Activated CD8-positive, alpha-beta T cell treated with anti-CD3 and anti-CD28 coated beads, Interleukin-2, amount 10 ng/mL, durations not matched to agents 7 days and 5 days (primary cell): ENCODE measurements at regions of chr10 and their contacts with region 1.

Region 1: DNA sequence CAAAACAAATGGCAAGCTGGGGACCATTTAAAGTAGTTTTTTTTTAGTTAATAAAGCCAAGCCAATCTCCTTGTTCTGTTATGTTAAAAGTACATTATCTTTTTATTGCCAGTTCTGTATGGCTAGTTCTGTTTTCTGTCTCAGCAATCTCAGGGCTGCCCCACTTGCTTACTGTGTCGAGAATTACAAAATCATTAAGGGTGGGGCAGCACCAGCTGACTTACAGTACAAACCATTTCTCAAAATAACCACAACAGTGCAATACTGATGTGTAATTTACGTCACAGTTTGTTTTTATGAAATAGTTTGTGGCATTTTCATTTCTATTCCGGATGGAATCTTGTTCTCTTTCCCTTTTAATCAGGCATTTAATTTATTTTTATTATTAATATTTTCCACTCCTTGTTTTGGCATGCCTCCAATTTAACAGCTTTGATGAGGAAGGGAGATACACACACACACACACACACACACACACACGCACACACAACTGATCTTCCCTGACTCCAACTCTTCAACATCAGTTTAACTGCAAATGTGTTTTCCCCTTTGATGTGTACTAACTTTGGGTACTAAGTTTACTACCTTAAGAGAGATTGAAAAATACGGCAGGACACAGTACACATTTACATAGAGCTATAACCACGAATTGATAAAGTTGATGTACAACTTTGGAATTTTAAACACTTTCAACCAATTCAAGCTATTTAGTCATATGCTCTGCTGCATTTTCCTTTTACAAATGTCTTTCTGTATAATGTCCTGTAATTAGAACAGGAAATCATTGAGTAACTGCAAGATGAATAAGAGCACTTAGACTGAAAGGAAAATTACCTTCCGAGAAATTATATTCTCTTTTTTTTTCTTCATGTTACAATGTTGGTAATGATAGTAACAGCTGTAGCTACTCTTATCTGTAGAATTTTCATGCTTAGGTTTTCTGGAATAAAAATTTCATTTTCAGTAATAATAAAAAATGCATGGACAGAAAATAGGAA is 91.5 kb downstream of the ARID5B start:
- DNase-seq: peak; percentile 49
- ATAC-seq: peak; percentile 49
- H3K4me3 Mint-ChIP-seq: peak overlapping the region; percentile 50
- H3K27ac Mint-ChIP-seq: peak overlapping the region; percentile 75
- H3K4me1 Mint-ChIP-seq: peaks cover 44% of the 10 kb centered on the region
- H3K27me3 Mint-ChIP-seq: no peaks in the 10 kb centered on the region

Region 2: DNA sequence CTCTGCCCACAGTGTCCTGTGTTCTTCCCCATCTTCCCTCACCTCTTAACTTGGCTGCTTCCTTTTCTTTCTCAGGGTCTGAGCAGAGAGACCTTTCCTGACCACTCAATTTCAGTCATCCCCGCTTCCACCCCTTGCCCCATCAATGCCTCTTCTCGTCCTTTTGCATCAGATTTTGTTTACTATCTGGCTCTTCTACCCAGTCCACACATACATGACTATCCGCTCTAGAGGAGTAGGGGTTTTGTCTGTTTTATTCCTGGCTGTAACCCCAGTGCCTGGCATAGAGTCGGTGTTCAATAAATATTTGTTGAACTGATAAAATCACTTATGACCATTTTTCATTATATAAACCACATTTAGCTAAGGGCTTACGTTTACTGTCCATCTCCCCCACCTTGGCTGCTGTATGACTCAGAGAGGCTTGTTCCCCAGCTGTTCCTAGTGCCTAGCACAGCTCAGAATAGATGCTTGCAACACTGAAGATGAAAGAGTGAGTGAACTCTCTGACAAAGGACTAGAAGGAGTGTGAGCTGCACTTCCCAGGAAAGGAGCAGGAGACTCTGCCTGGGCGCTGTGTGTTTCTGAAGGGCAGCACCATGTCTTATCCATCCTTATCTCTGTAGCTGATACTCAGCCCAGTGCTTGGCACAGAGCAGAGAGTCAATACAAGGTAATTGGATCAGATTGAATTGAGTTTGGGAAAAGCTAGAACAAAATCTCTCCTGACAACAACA is 69.6 kb before region 1 on chr10:
- CTCF ChIA-PET with region 1: no interaction called
- POLR2A ChIA-PET with region 1: no interaction called
- DNase-seq: no peak
- ATAC-seq: no peak
- H3K4me3 Mint-ChIP-seq: no peak overlapping the region
- H3K27ac Mint-ChIP-seq: no peak overlapping the region
- H3K4me1 Mint-ChIP-seq: peaks cover 6% of the 10 kb centered on the region
- H3K27me3 Mint-ChIP-seq: no peaks in the 10 kb centered on the region

Region 3: DNA sequence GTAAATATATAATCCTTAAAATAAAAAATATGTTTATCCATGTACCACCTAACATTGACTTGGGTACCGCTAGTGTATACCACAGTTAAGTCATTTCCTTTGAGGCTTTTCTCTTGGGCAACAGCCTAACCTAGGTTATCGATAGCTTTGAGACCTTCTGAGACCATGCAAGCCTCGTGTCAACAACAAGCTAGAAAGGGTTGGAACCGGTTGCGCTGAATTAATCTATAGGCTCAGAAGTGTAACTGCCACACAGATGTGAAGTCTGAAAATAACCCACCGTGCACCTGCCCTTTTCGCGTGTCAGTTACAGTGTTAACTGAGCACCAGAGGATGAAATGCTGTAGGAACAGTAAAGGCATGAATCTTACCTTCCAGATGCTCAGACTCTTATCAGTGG is 31.7 kb before region 1 on chr10:
- CTCF ChIA-PET with region 1: interaction called, 7 read pairs
- POLR2A ChIA-PET with region 1: interaction called, 10 read pairs
- DNase-seq: peak; percentile 59
- ATAC-seq: peak; percentile 89
- H3K4me3 Mint-ChIP-seq: peak overlapping the region; percentile 42
- H3K27ac Mint-ChIP-seq: peak overlapping the region; percentile 82
- H3K4me1 Mint-ChIP-seq: peaks cover 68% of the 10 kb centered on the region
- H3K27me3 Mint-ChIP-seq: no peaks in the 10 kb centered on the region